Prostate gland (tissue), 2 donors: ENCODE measurements at regions of chr20 and their contacts with region 1.

Region 1: DNA sequence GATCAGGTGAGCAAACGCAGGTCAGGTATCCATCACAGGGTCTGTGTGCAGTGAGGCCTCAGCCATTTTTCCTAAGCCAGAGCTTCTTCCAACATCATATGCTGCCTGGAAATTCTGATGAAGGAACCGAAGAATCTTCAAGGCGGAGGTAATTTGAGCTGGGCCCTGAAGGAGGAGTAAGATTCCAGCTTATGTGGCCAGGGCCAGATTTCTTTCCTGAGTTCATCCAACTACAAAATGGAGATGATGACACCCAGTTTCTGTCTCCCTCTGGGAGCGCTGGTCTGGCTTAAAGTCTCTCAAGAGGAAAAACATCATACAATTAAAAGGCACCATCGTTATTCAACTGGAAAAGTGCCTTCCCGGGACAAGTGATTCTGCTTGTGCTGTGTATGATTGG is 6.9 kb upstream of the MANBAL start:
- DNase-seq: no peak
- H3K4me3 ChIP-seq: no peak overlapping the region
- H3K27ac ChIP-seq: no peak overlapping the region
- H3K4me1 ChIP-seq: no peaks in the 10 kb centered on the region
- H3K27me3 ChIP-seq: no peaks in the 10 kb centered on the region
- CTCF ChIP-seq: peak in 2 of 4 experiments; percentile 55 to 57
- POLR2A ChIP-seq: no peak

Region 2: GRCh38 chr20:37384683-37385174 is 102.2 kb after region 1 on chr20:
- intact Hi-C with region 1: loop called (anchors 2 kb)
- DNase-seq: no peak
- H3K4me3 ChIP-seq: peak overlapping the region; percentile 10 to 12
- H3K27ac ChIP-seq: no peak overlapping the region
- H3K4me1 ChIP-seq: no peaks in the 10 kb centered on the region
- H3K27me3 ChIP-seq: no peaks in the 10 kb centered on the region
- CTCF ChIP-seq: peak; percentile 85 to 95 (median 92)
- POLR2A ChIP-seq: no peak